A549 (cell line): ENCODE measurements at regions of chr17 and their contacts with region 1.

Region 1: GRCh38 chr17:37770631-37771518 is 26.0 kb upstream of the HNF1B start:
- DNase-seq: peak; percentile 79 to 82
- ATAC-seq: peak; percentile 89 to 92
- H3K4me3 ChIP-seq: no peak overlapping the region
- H3K27ac ChIP-seq: peak overlapping the region; percentile 32 to 56; a peak in 5 of 6 replicates
- H3K4me1 ChIP-seq: peaks cover 4% of the 10 kb centered on the region; the same call in 2 of the 3 replicates
- CTCF ChIP-seq: peak; percentile 87
- EP300 ChIP-seq: no peak
- POLR2A ChIP-seq: no peak
- RAD21 ChIP-seq: peak; percentile 93 to 97

Region 2: DNA sequence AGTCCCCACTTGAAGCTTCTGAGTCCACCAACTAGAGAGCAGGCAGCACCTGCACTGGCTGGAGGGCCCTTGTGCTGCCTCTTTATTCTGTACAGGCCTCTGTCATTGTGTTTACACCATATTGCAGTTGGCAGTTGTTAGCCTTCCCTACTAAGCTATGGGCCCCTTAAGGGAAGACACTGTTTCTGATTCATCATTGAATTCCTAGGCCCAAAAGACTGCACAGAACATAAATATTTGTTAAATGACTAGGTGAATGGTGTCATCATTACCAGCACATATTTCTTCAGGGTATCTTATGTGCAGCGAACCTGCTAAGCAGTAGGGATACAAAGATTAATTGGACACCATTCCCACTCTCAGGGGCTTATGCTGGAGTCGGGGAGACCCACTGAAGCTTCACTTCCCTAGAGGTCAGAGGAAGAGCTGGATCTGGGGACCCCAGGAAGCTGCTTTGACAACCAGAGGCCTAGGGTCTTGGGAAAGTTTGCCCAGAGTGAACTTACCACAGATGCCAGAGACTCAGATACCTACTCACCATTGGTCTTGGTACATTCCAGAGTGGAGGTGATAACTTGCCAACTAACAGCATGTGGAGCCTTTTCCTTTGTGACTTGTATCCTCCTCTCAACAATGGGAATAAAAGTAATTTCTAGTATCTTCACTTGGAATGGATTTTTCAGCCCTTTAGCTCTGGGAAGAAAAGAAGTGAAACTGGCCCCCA is 98.9 kb before region 1 on chr17:
- CTCF ChIA-PET with region 1: interaction called, 10 read pairs
- POLR2A ChIA-PET with region 1: no interaction called
- DNase-seq: peak; percentile 77 to 83
- ATAC-seq: peak; percentile 90 to 91
- H3K4me3 ChIP-seq: no peak overlapping the region
- H3K27ac ChIP-seq: peak overlapping the region; percentile 72 to 85
- H3K4me1 ChIP-seq: peaks cover 24% of the 10 kb centered on the region
- CTCF ChIP-seq: no peak
- EP300 ChIP-seq: 0 out of 5 replicates have a peak, but pooled peaks of 1 of the 2 experiments have one; percentile 40
- POLR2A ChIP-seq: no peak
- RAD21 ChIP-seq: no peak

Region 3: GRCh38 chr17:37717627-37718323 is 53.1 kb before region 1 on chr17:
- CTCF ChIA-PET with region 1: interaction called, 20 read pairs
- POLR2A ChIA-PET with region 1: no interaction called
- DNase-seq: no peak
- ATAC-seq: no peak
- H3K4me3 ChIP-seq: peak overlapping the region; percentile 22
- H3K27ac ChIP-seq: peak overlapping the region; percentile 89 to 95
- H3K4me1 ChIP-seq: peaks cover 74% of the 10 kb centered on the region
- CTCF ChIP-seq: no peak
- EP300 ChIP-seq: no peak
- POLR2A ChIP-seq: no peak
- RAD21 ChIP-seq: no peak

Region 4: GRCh38 chr17:37744961-37745800 is 25.7 kb before region 1 on chr17 and contains the start of gene HNF1B:
- CTCF ChIA-PET with region 1: interaction called, 69 read pairs
- POLR2A ChIA-PET with region 1: interaction called, 10 read pairs
- DNase-seq: peak; percentile 68 to 76
- ATAC-seq: peak; percentile 40 to 50
- H3K4me3 ChIP-seq: peak within 1 kb of the TSS; percentile 67
- H3K27ac ChIP-seq: peak within 1 kb of the TSS; percentile 81 to 94
- H3K4me1 ChIP-seq: peaks cover 23% of the 10 kb centered on the region
- CTCF ChIP-seq: peak; percentile 48
- EP300 ChIP-seq: no peak
- POLR2A ChIP-seq: peak; percentile 60
- RAD21 ChIP-seq: peak; percentile 55 to 59; a peak in 4 of 5 replicates
- polyA plus RNA-seq, gene HNF1B: 13.3 and 17.0 TPM in 2 replicates

Region 5: GRCh38 chr17:37791447-37792399 is 20.8 kb after region 1 on chr17:
- CTCF ChIA-PET with region 1: interaction called, 57 read pairs
- POLR2A ChIA-PET with region 1: no interaction called
- DNase-seq: peak; percentile 35 to 80
- ATAC-seq: peak in 1 of 2 experiments; percentile 67; a peak in 3 of 6 replicates
- H3K4me3 ChIP-seq: no peak overlapping the region
- H3K27ac ChIP-seq: peak overlapping the region in 1 of 2 experiments; percentile 21; a peak in 2 of 6 replicates
- H3K4me1 ChIP-seq: peaks cover 29% of the 10 kb centered on the region
- CTCF ChIP-seq: peak; percentile 83
- EP300 ChIP-seq: no peak
- POLR2A ChIP-seq: no peak
- RAD21 ChIP-seq: peak; percentile 72 to 79